Gastrocnemius medialis (tissue), 4 donors: ENCODE measurements at regions of chr5 and their contacts with region 1.

Region 1: DNA sequence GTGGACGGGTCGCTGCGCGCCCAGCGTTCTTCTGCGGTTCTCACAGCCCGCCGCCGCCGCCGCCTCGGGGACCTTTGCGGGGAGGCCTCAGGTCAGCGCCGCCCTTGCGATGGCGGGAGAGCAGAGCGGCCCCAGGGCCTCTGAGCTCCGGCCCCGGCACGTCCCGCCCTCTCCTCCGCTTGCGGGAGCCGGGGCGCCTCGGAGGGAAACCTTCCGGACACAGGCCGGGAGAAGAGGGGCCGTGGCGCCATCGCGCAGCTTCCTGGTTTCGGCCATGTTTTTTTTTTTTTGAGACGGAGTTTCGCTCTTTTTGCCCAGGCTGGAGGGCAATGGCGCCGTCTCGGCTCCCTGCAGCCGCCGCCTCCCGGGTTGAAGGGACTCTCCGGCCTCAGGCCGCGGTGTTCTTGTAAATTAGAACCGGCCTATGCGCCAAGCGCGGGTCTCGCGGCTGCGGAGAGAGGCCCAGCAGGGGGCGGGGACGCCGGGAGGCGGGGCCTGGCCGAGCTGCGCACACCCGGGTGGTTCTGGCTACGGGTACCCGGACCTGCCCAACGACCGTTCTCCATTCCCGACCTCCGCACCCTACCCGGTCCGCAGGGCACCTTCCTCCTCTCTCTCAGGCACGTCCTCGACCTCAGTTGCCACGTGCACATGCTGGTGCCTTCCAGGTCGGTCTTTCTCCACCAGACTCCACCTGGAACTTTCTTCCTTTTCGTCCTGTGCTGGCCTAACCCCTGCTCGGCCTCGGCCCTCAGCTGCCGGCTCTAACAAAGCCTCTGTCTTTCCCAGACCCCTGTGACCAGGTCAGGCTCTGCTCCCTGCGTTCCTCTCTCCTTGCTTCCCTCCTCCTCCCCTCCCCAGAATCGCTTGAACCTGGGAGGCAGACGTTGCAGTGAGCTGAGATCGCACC is 28.8 kb upstream of the MGAT1 start:
- DNase-seq: peak; percentile 73 to 81
- ATAC-seq: peak; percentile 88 to 91
- H3K4me3 ChIP-seq: peak overlapping the region; percentile 68 to 98 (median 83)
- H3K27ac ChIP-seq: peak overlapping the region; percentile 90 to 98 (median 96)
- H3K4me1 ChIP-seq: peaks cover 26 to 31% of the 10 kb centered on the region in 2 donors
- H3K27me3 ChIP-seq: no peaks in the 10 kb centered on the region
- CTCF ChIP-seq: peak in 4 of 5 experiments; percentile 7 to 49 (median 36)
- POLR2A ChIP-seq: peak; percentile 79 to 82

Region 2: GRCh38 chr5:180313687-180314505 is 517.5 kb before region 1 on chr5:
- in situ Hi-C with region 1: no loop called
- intact Hi-C with region 1: no loop called
- DNase-seq: no peak
- ATAC-seq: no peak
- H3K4me3 ChIP-seq: peak overlapping the region in 1 of 4 donors; percentile 35
- H3K27ac ChIP-seq: no peak overlapping the region
- H3K4me1 ChIP-seq: no peaks in the 10 kb centered on the region
- H3K27me3 ChIP-seq: no peaks in the 10 kb centered on the region
- CTCF ChIP-seq: no peak
- POLR2A ChIP-seq: no peak

Region 3: DNA sequence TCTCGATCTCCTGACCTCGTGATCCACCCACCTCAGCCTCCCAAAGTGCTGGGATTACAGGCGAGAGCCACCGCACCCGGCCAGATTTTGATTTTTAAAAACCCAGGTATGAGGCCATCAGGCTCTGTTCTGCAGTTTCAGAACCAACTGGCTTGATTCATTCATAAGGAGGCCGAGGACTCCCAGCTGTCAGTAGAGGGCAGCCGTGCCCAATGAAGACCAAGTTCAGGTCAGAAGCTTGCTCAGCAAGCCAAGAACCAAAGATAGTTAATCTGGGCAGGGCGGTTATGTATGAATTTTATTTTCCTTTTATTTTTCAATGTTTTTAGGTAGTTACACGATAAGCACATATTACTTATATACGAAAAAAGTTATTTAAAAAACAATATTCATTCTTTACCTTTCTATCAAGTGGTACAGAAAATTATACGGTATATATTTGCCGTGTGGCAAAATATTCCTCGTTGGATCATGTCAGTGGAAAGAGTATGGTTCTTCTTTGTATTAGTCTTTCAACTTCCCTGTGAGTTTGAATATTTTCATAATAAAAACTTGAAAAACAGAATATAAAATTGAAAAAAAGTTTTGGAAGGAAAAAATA is 46.8 kb before region 1 on chr5:
- in situ Hi-C with region 1: no loop called
- intact Hi-C with region 1: loop called (anchors 1 kb)
- DNase-seq: peak; percentile 57 to 76
- ATAC-seq: peak; percentile 82 to 86
- H3K4me3 ChIP-seq: peak overlapping the region in 1 of 4 donors; percentile 21
- H3K27ac ChIP-seq: peak overlapping the region in 3 of 4 donors; percentile 62 to 73 (median 65)
- H3K4me1 ChIP-seq: peaks cover 21 to 31% of the 10 kb centered on the region in 2 donors
- H3K27me3 ChIP-seq: no peaks in the 10 kb centered on the region
- CTCF ChIP-seq: peak; percentile 42 to 82 (median 67)
- POLR2A ChIP-seq: no peak

Region 4: GRCh38 chr5:180802325-180803180 is 28.8 kb before region 1 on chr5 and contains the start of gene MGAT1:
- in situ Hi-C with region 1: no loop called
- intact Hi-C with region 1: loop called (anchors 1 kb)
- DNase-seq: peak; percentile 81 to 85
- ATAC-seq: peak; percentile 82
- H3K4me3 ChIP-seq: peak within 1 kb of the TSS; percentile 96 to 99 (median 96)
- H3K27ac ChIP-seq: peak within 1 kb of the TSS; percentile 94 to 100 (median 100)
- H3K4me1 ChIP-seq: peaks cover 83 to 92% of the 10 kb centered on the region in 2 donors
- H3K27me3 ChIP-seq: no peaks in the 10 kb centered on the region
- CTCF ChIP-seq: no peak
- POLR2A ChIP-seq: peak; percentile 93 to 95
- total RNA-seq, gene MGAT1: 100 to 138 (median 115) TPM

Region 5: DNA sequence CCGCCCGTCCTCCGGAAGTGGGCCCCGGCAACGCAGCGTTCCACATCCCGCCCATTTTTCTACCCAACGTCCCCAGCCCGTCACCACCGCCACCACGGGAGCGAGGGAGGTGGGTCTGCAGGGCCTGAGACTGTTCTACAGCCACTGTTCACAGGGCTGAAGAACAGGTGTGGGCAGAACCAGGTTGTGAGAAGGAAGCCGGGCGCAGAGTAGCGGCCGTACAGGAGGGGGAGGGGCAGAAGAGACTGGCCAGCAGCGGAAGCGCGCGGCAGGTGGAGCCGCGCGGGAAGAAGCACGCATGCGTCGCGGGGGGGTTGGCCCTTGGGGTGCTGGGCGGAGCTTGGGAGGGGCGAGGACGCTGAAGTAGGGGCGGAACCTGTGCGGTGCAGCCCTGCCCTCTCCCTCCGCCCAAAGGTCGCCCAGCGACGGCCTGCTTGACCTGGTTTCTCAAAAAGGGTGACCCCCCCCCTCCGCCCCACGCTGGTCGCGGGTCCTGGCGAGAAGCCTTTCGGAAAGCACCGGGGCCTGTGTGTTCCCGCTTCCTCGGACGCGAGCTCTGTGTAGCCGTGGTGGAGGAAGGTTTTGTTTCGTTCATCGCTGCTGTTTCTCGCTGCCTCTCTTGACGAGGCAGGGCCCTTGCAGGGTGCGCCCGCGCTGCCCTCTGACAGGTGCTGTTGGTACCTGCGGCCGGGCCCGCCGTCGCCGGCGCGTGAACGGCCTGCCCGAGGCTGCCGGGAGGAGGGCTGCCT is 21.0 kb before region 1 on chr5:
- in situ Hi-C with region 1: no loop called
- intact Hi-C with region 1: loop called (anchors 2 kb)
- DNase-seq: peak; percentile 96
- ATAC-seq: peak; percentile 83 to 86
- H3K4me3 ChIP-seq: peak overlapping the region; percentile 74 to 94 (median 79)
- H3K27ac ChIP-seq: peak overlapping the region; percentile 94 to 100 (median 100)
- H3K4me1 ChIP-seq: peaks cover 48 to 52% of the 10 kb centered on the region in 2 donors
- H3K27me3 ChIP-seq: no peaks in the 10 kb centered on the region
- CTCF ChIP-seq: no peak
- POLR2A ChIP-seq: peak; percentile 75 to 85